ENCODE measurements at regions of chr2 and their contacts with region 1.

Region 1: DNA sequence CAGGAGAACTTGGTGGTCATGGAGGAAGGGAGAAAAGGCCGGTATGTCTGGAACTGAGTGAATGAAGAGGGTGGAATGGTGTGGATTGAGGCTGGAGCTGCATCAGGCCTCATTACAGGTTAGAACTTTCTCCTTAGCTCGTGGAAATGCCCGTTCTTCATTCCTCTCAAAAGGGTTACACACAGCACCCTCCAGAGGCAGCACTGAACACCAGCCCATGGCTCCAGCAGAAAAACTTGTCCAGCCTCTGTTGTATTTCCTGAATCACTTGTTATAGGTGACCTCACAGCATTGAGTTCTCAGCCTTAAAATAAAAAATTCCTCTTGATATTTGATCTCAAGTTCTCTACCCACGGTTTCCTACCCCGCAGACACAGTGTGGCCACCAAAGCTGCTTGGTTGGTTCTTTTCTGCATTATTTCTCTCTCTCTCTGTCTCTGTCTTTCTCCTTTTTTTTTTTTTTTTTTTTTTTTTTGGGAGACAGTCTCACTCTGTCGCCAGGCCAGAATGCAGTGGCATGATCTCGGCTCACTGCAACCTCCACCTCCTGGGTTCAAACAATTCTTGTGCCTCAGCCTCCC is 89.6 kb downstream of the ITGB1BP1 start:
- DNase-seq: peak; percentile 47
- ATAC-seq: peak; percentile 73 to 74

Region 2: DNA sequence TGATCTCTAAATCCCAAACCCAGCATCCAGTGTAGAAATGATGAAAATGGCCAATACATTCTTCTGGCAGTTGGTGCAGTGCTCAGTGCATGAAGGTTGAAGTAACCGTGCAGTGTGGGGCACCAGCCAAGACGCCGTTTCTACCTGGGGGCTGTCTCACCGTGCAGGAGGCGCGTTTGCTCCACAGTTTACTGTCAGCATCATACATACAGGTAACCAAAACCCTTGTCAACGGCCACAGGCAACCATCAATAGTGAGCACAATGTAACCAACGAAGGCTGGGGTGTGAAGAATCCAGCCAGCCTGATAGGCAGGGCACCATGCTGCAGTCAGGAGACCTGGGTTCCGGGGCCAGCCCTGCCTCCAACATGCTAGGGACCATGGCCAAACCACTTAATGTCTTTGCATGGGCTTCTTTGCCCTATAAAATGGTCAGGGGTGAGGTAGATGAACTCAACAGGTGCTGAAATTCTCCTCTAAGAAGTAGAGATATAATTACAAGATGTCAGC is 779.3 kb before region 1 on chr2:
- intact Hi-C with region 1: no loop called
- DNase-seq: no peak
- ATAC-seq: no peak

Region 3: GRCh38 chr2:9152975-9153642 is 180.6 kb before region 1 on chr2:
- intact Hi-C with region 1: loop called in 1 of 2 experiments (anchors 5 kb)
- DNase-seq: no peak
- ATAC-seq: peak; percentile 28 to 72

Region 4: DNA sequence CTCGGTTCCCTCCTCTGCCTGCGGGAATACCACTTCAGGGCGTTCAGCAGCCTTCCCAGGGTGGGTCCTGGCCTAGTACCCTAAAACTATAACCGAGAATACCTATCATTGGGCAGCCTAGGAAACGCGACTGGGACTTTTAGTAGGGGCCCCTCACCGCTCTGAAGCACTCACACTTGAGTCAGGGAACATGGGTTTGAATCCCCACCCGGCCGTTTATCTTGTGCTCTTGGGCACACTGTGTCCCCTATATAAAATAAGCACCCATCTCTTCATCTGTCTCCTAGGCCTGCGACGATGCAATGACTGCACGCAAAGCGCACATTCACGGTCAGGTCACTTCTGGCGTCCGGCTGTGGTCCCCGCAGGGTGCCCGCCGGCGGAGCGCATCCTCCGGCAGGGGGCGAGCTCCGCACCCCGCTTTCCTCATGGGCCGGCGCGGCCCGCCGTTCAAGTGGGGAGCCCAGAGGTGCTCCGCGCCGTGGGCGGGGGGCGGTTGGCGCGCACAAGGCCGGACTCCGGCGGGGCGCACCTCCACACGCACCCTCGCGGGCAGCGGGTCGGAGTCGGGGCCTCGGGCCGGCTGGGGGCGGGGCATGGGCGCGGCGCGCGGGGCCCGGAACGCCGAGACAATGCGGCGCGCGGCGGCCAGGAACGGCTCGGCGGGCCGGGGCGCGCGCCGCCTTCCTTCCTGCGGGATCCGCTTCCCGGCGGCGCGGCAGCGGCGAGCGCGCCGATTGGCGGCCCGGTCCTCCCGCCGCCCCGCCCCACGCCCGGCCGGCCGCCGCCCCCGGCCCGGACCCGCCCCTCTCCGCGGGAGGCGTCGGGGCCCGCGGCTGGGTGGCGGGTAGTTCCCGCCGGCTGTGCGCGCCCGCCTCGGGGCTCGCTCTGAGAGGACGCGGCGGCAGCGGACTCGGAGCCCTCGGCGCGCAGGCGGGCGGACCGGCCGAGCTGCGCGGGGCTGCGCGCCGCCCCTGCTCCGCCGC is 127.4 kb before region 1 on chr2 and contains the start of gene ASAP2:
- intact Hi-C with region 1: loop called (anchors 5 to 10 kb)
- DNase-seq: peak; percentile 81
- ATAC-seq: peak; percentile 78 to 88
- total RNA-seq, gene ASAP2: 13.4 to 18.2 TPM

Region 5: GRCh38 chr2:9212661-9213411 is 120.8 kb before region 1 on chr2:
- intact Hi-C with region 1: loop called (anchors 5 to 10 kb)
- DNase-seq: peak; percentile 53
- ATAC-seq: peak; percentile 51 to 76

Region 6: GRCh38 chr2:9582624-9583023 is 248.9 kb after region 1 on chr2:
- intact Hi-C with region 1: no loop called
- DNase-seq: no peak
- ATAC-seq: no peak